SK-N-SH (cell line): ENCODE measurements at regions of chr17 and their contacts with region 1.

Region 1: DNA sequence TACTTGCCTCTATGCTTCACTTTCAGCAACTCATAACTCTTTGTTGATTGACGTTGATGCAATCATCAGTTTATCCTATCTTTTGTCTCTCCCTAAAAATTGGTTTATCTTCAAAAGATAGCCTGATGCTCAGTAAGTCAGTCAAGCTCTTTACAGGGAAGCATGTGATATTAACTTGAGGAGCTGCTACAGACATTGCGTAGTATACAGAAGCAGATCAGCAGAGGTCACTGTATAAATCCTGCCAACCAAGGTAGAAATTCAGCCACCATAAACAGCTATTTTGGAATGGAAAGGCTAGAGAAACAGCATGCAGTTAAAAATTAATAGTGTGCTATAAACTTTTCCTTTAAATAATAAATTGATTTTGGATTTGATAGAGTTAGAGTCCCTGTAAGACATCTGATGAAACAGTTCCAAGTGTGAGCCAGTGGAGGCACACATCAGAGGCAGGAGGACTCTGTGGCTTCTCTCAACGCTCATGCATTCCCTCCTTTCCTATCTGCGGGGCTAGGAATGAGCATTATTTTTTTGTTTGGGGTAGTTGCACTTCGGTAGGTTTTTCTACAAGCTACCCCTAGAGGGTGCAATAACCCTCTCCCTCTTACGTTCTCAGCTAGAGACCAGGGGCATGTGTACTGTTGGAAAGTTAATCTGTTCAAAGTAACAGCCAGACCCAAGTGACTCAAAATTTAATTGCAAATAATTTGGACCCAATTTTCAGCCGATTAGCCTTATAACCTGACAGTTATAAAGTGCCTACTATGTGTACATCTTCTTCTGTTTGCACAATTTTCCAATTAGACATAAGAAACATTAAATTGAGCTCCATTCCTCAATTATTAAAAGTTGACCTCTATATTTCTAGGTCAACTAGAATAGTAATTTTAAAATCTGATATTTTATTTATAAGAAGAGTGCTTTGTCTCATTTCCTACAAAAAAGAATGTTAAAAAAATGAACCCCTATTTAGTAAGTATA is 647.7 kb upstream of the SOX9 start:
- DNase-seq: peak; percentile 65
- H3K4me3 ChIP-seq: no peak overlapping the region
- H3K27ac ChIP-seq: no peak overlapping the region
- H3K4me1 ChIP-seq: peaks cover 0 to 4% of the 10 kb centered on the region in 2 experiments; a peak in 1 of 4 replicates
- H3K27me3 ChIP-seq: no peaks in the 10 kb centered on the region
- CTCF ChIP-seq: peak; percentile 94
- EP300 ChIP-seq: 0 out of 4 replicates have a peak, but pooled peaks of 1 of the 2 experiments have one; percentile 9
- RAD21 ChIP-seq: peak; percentile 97

Region 2: GRCh38 chr17:71438631-71439146 is 34.4 kb before region 1 on chr17:
- CTCF ChIA-PET with region 1: interaction called, 11 read pairs
- POLR2A ChIA-PET with region 1: no interaction called
- DNase-seq: peak; percentile 56
- H3K4me3 ChIP-seq: no peak overlapping the region
- H3K27ac ChIP-seq: peak overlapping the region; percentile 78 to 86
- H3K4me1 ChIP-seq: peaks cover 12 to 24% of the 10 kb centered on the region in 2 experiments
- H3K27me3 ChIP-seq: no peaks in the 10 kb centered on the region
- CTCF ChIP-seq: peak; percentile 34
- EP300 ChIP-seq: peak; percentile 76 to 90; a peak in 3 of 4 replicates
- RAD21 ChIP-seq: peak; percentile 72

Region 3: GRCh38 chr17:71455219-71455618 is 17.9 kb before region 1 on chr17:
- CTCF ChIA-PET with region 1: interaction called, 21 read pairs
- POLR2A ChIA-PET with region 1: no interaction called
- DNase-seq: no peak
- H3K4me3 ChIP-seq: no peak overlapping the region
- H3K27ac ChIP-seq: peak overlapping the region; percentile 46 to 76; a peak in 3 of 4 replicates
- H3K4me1 ChIP-seq: peaks cover 0 to 18% of the 10 kb centered on the region in 2 experiments; a peak in 2 of 4 replicates
- H3K27me3 ChIP-seq: no peaks in the 10 kb centered on the region
- CTCF ChIP-seq: no peak
- EP300 ChIP-seq: peak; percentile 38 to 67; a peak in 2 of 4 replicates
- RAD21 ChIP-seq: no peak

Region 4: GRCh38 chr17:71460943-71461342 is 12.2 kb before region 1 on chr17:
- CTCF ChIA-PET with region 1: interaction called, 21 read pairs
- POLR2A ChIA-PET with region 1: no interaction called
- DNase-seq: no peak
- H3K4me3 ChIP-seq: no peak overlapping the region; a peak in 1 of 4 replicates
- H3K27ac ChIP-seq: no peak overlapping the region
- H3K4me1 ChIP-seq: no peaks in the 10 kb centered on the region; a peak in 2 of 4 replicates
- H3K27me3 ChIP-seq: no peaks in the 10 kb centered on the region
- CTCF ChIP-seq: peak; percentile 75
- EP300 ChIP-seq: no peak
- RAD21 ChIP-seq: peak; percentile 66

Region 5: DNA sequence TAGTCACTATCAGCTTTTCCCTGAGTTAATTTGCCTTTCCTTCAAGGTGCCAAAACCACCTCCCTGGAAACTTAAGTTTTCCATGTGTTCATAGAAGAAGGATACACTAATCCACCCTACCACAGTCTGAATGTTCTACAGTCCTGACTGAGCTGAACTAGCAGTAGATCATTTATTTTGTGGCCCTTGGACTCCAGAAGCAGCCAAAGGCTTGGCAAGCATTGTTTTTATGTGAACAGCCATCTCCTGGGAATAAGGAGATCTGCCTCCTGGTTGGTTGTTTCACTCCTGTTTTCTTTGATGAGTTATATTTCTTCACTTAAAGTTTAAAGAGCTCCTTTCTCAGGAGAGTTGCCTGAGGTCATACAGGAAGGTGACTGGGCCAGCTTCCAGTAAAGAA is 13.2 kb after region 1 on chr17:
- CTCF ChIA-PET with region 1: interaction called, 54 read pairs
- POLR2A ChIA-PET with region 1: no interaction called
- DNase-seq: no peak
- H3K4me3 ChIP-seq: no peak overlapping the region
- H3K27ac ChIP-seq: no peak overlapping the region
- H3K4me1 ChIP-seq: no peaks in the 10 kb centered on the region; a peak in 1 of 4 replicates
- H3K27me3 ChIP-seq: no peaks in the 10 kb centered on the region
- CTCF ChIP-seq: no peak
- EP300 ChIP-seq: no peak
- RAD21 ChIP-seq: no peak

Region 6: GRCh38 chr17:71636644-71637043 is 163.5 kb after region 1 on chr17:
- CTCF ChIA-PET with region 1: no interaction called
- POLR2A ChIA-PET with region 1: no interaction called
- DNase-seq: no peak
- H3K4me3 ChIP-seq: no peak overlapping the region
- H3K27ac ChIP-seq: no peak overlapping the region
- H3K4me1 ChIP-seq: peaks cover 11 to 21% of the 10 kb centered on the region in 2 experiments
- H3K27me3 ChIP-seq: no peaks in the 10 kb centered on the region
- CTCF ChIP-seq: no peak
- EP300 ChIP-seq: no peak
- RAD21 ChIP-seq: no peak

Region 7: DNA sequence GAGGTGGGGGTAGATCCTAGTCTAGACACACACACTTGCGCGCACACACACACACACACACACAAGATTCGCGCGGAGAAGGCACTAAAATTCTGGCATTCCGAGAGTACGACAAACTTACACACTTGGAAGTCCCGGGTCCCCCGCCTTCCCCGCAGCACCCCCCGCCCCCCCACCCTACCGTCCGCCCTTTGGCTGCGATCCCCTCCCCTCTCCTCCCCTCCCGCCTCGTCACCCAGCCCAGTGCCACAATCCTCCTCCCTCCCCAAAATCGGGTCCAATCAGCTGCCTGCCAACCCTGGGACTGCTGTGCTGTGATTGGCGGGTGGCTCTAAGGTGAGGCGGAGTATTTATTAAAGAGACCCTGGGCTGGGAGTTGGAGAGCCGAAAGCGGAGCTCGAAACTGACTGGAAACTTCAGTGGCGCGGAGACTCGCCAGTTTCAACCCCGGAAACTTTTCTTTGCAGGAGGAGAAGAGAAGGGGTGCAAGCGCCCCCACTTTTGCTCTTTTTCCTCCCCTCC is 647.6 kb after region 1 on chr17 and contains the start of gene SOX9:
- CTCF ChIA-PET with region 1: interaction called, 55 read pairs
- POLR2A ChIA-PET with region 1: no interaction called
- DNase-seq: peak; percentile 95
- H3K4me3 ChIP-seq: peak within 1 kb of the TSS; percentile 82 to 99
- H3K27ac ChIP-seq: peak within 1 kb of the TSS; percentile 60 to 90
- H3K4me1 ChIP-seq: peaks cover 16 to 29% of the 10 kb centered on the region in 2 experiments; a peak in 3 of 4 replicates
- H3K27me3 ChIP-seq: no peaks in the 10 kb centered on the region
- CTCF ChIP-seq: no peak
- EP300 ChIP-seq: peak in 1 of 2 experiments; percentile 26; a peak in 1 of 4 replicates
- RAD21 ChIP-seq: no peak
- polyA plus RNA-seq, gene SOX9: 20.2 and 35.3 TPM in 2 replicates